ENCODE measurements at regions of chr3 and their contacts with region 1.

Region 1: GRCh38 chr3:172332256-172333041 is 115.8 kb downstream of the GHSR start:
- DNase-seq: peak; percentile 68
- ATAC-seq: peak; percentile 90
- H3K4me3 Mint-ChIP-seq: no peak overlapping the region
- H3K27ac Mint-ChIP-seq: no peak overlapping the region
- H3K4me1 Mint-ChIP-seq: peaks cover 5% of the 10 kb centered on the region
- H3K27me3 Mint-ChIP-seq: no peaks in the 10 kb centered on the region

Region 2: GRCh38 chr3:172046268-172046915 is 286.1 kb before region 1 on chr3:
- CTCF ChIA-PET with region 1: interaction called, 10 read pairs
- POLR2A ChIA-PET with region 1: no interaction called
- DNase-seq: no peak
- ATAC-seq: no peak
- H3K4me3 Mint-ChIP-seq: no peak overlapping the region
- H3K27ac Mint-ChIP-seq: no peak overlapping the region
- H3K4me1 Mint-ChIP-seq: peaks cover 5% of the 10 kb centered on the region
- H3K27me3 Mint-ChIP-seq: no peaks in the 10 kb centered on the region

Region 3: GRCh38 chr3:172317984-172318383 is 14.5 kb before region 1 on chr3:
- CTCF ChIA-PET with region 1: interaction called, 37 read pairs
- POLR2A ChIA-PET with region 1: no interaction called
- DNase-seq: no peak
- ATAC-seq: no peak
- H3K4me3 Mint-ChIP-seq: no peak overlapping the region
- H3K27ac Mint-ChIP-seq: no peak overlapping the region
- H3K4me1 Mint-ChIP-seq: peaks cover 7% of the 10 kb centered on the region
- H3K27me3 Mint-ChIP-seq: no peaks in the 10 kb centered on the region

Region 4: GRCh38 chr3:172666873-172667694 is 334.6 kb after region 1 on chr3:
- CTCF ChIA-PET with region 1: interaction called, 70 read pairs
- POLR2A ChIA-PET with region 1: interaction called, 3 read pairs
- DNase-seq: peak; percentile 90
- ATAC-seq: peak; percentile 100
- H3K4me3 Mint-ChIP-seq: no peak overlapping the region
- H3K27ac Mint-ChIP-seq: no peak overlapping the region
- H3K4me1 Mint-ChIP-seq: peaks cover 19% of the 10 kb centered on the region
- H3K27me3 Mint-ChIP-seq: peaks cover 5% of the 10 kb centered on the region

Measured in activated CD8-positive, alpha-beta T cell treated with anti-CD3 and anti-CD28 coated beads, Interleukin-2, amount 10 ng/mL, durations not matched to agents 7 days and 5 days (primary cell).